Activated CD8-positive, alpha-beta T cell treated with anti-CD3 and anti-CD28 coated beads for 36 hours (primary cell): ENCODE measurements at regions of chr1 and their contacts with region 1.

Region 1: DNA sequence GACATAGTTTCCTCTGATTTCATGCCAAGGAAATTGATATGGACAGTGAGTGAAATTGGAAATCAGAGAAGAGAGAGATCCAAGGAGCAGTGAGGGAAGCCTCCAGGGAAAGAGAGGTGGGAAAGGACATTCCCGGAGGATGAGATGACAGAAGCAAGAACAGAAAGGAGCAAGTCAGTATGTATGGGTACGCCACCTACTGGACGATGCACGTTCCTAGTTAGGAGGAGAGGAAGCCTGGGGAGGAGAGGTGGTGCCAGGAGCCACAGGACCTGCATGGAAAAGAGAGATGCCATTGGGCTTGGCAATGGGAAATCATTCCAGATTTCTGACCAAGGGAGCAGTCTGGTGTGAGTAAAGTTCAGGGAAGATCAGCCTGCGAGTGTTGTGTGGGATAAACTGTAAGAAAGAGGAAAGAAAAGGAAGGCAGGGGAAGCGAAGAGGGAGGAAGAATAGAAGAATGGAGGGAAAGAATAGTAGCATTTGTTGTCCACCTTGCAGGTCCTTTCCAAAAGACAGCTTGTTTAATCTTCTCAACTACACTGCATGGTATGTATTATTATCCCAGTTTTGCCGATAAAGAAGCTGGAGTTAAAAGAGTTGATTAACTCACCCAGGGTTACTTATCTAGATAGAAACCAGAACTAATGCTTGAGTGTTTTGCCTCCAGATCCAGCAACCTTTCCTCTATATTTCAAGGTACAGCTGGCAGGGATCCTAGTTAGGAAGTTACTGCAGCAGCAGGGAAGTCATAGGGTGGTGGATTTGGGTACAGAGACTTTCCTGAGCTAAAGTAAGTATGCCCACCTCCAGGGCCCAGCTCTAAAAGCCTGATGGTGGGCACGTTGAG is 27.4 kb downstream of the C1orf116 start:
- DNase-seq: peak; percentile 62
- ATAC-seq: peak; percentile 47
- H3K4me3 Mint-ChIP-seq: no peak overlapping the region
- H3K27ac Mint-ChIP-seq: no peak overlapping the region
- H3K4me1 Mint-ChIP-seq: no peaks in the 10 kb centered on the region
- H3K27me3 Mint-ChIP-seq: peaks cover 3% of the 10 kb centered on the region
- CTCF ChIP-seq: peak; percentile 74

Region 2: GRCh38 chr1:206890690-206891089 is 114.5 kb before region 1 on chr1:
- CTCF ChIA-PET with region 1: no interaction called
- POLR2A ChIA-PET with region 1: no interaction called
- intact Hi-C with region 1: no loop called
- DNase-seq: no peak
- ATAC-seq: no peak
- H3K4me3 Mint-ChIP-seq: no peak overlapping the region
- H3K27ac Mint-ChIP-seq: peak overlapping the region; percentile 4
- H3K4me1 Mint-ChIP-seq: peaks cover 52% of the 10 kb centered on the region
- H3K27me3 Mint-ChIP-seq: no peaks in the 10 kb centered on the region
- CTCF ChIP-seq: no peak

Region 3: DNA sequence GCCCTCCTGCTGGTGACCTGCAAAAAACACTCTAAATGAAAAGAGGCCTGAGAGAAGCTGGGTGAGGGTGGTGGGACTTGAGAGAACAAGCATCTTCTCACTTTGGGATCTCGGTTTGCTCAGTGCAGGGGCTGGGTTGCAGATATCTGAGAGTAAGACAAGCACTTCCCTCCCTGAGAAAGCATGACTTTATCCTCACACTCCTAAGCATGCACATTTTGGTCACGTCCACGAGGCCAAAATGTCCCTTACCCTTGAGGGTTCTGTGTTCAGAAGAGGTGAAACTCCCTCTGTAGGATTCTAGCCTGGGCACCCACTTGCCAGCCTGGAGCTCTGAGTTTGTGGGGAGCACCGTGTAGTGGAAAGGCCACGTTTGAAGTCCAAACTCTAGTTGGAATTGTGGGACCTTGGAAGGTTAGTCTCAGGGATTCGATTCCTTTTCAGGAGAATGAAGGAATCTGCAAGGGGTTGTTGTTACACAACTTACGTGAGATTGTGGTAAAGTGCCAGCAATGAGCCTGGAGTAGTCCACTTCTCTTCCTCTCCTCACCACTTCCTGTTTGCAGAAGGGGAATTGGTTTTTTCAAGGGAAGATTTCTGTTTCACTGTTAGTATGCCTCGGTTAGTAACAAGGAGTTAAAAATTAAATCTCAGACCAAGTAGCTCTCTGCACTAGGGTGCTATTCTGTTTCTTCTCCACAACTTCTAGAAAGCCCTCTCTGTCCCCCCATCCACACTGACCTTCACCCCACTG is 37.9 kb before region 1 on chr1:
- CTCF ChIA-PET with region 1: interaction called, 11 read pairs
- POLR2A ChIA-PET with region 1: no interaction called
- intact Hi-C with region 1: no loop called
- DNase-seq: no peak
- ATAC-seq: no peak
- H3K4me3 Mint-ChIP-seq: no peak overlapping the region
- H3K27ac Mint-ChIP-seq: peak overlapping the region; percentile 11
- H3K4me1 Mint-ChIP-seq: peaks cover 31% of the 10 kb centered on the region
- H3K27me3 Mint-ChIP-seq: peaks cover 6% of the 10 kb centered on the region
- CTCF ChIP-seq: no peak

Region 4: DNA sequence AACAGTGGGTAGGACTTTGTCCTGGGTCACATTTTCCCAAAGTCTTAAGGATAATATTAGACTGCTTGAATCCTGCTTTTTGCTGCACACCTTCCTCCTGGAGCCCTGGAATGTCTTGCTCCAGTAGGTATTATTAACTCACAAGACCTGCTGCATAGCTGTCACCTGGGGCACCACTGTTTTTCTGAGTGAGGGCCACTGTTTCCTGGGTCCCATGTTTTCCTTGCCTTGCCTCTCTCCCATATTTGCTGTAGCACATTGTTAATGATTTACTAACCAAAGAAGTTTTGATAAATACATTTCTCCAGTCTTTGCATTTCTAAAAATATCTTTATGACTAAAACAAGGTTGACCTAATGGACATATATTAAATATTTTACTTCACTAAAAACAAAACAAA is 12.4 kb before region 1 on chr1:
- CTCF ChIA-PET with region 1: interaction called, 27 read pairs
- POLR2A ChIA-PET with region 1: no interaction called
- intact Hi-C with region 1: no loop called
- DNase-seq: no peak
- ATAC-seq: no peak
- H3K4me3 Mint-ChIP-seq: no peak overlapping the region
- H3K27ac Mint-ChIP-seq: no peak overlapping the region
- H3K4me1 Mint-ChIP-seq: no peaks in the 10 kb centered on the region
- H3K27me3 Mint-ChIP-seq: peaks cover 7% of the 10 kb centered on the region
- CTCF ChIP-seq: no peak

Region 5: GRCh38 chr1:207015791-207016190 is 10.6 kb after region 1 on chr1:
- CTCF ChIA-PET with region 1: interaction called, 26 read pairs
- POLR2A ChIA-PET with region 1: no interaction called
- intact Hi-C with region 1: no loop called
- DNase-seq: no peak
- ATAC-seq: peak; percentile 66
- H3K4me3 Mint-ChIP-seq: no peak overlapping the region
- H3K27ac Mint-ChIP-seq: no peak overlapping the region
- H3K4me1 Mint-ChIP-seq: peaks cover 6% of the 10 kb centered on the region
- H3K27me3 Mint-ChIP-seq: peaks cover 11% of the 10 kb centered on the region
- CTCF ChIP-seq: no peak

Region 6: DNA sequence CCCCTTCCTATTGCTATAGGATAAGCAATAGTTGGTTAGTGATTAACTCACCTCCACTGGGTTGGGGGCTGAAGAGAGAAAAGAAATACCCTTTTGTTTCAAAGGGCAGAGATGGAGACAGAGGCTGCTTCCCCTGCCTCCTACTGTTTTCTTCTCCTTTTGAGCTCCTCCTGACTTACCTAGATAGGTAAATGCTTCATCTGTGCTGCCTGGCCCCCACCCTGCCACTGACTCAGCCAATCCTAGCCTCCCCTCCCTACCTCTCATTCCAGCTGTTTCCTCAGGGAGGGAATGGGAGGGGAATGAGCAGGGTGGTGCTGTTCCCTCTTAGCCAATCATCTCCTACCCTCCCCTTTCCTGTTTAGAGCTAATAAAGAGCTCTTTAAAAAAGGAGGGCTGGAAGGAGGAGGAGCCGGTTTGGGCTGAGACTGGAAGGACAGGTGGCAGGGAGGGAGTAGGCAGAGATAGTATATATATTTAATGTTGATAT is 27.4 kb after region 1 on chr1 and contains the start of gene C1orf116:
- CTCF ChIA-PET with region 1: interaction called, 17 read pairs
- POLR2A ChIA-PET with region 1: no interaction called
- intact Hi-C with region 1: no loop called
- DNase-seq: no peak
- ATAC-seq: no peak
- H3K4me3 Mint-ChIP-seq: no peak within 1 kb of the TSS
- H3K27ac Mint-ChIP-seq: no peak within 1 kb of the TSS
- H3K4me1 Mint-ChIP-seq: no peaks in the 10 kb centered on the region
- H3K27me3 Mint-ChIP-seq: peaks cover 29% of the 10 kb centered on the region
- CTCF ChIP-seq: no peak
- total RNA-seq, gene C1orf116: 0.07 to 0.13 TPM